ENCODE measurements at regions of chr10 and their contacts with region 1.

Region 1: GRCh38 chr10:127278001-127278400 is 81.6 kb upstream of the INSYN2A start:
- DNase-seq: peak; percentile 69
- ATAC-seq: peak; percentile 48
- H3K4me3 ChIP-seq: no peak overlapping the region
- H3K27ac ChIP-seq: peak overlapping the region; percentile 68
- H3K4me1 ChIP-seq: peaks cover 47% of the 10 kb centered on the region
- H3K27me3 ChIP-seq: no peaks in the 10 kb centered on the region
- CTCF ChIP-seq: peak; percentile 26
- EP300 ChIP-seq: peak in 1 of 2 experiments; percentile 15; a peak in 1 of 4 replicates
- POLR2A ChIP-seq: no peak
- RAD21 ChIP-seq: no peak

Region 2: GRCh38 chr10:127300868-127301321 is 22.9 kb after region 1 on chr10:
- CTCF ChIA-PET with region 1: no interaction called
- POLR2A ChIA-PET with region 1: interaction called, 68 read pairs
- in situ Hi-C with region 1: no loop called
- intact Hi-C with region 1: loop called (anchors 1 kb)
- DNase-seq: peak; percentile 87
- ATAC-seq: peak; percentile 98
- H3K4me3 ChIP-seq: peak overlapping the region; percentile 32 to 55 (median 44); a peak in 4 of 6 replicates
- H3K27ac ChIP-seq: peak overlapping the region; percentile 93
- H3K4me1 ChIP-seq: peaks cover 40% of the 10 kb centered on the region
- H3K27me3 ChIP-seq: no peaks in the 10 kb centered on the region
- CTCF ChIP-seq: no peak
- EP300 ChIP-seq: no peak
- POLR2A ChIP-seq: peak; percentile 55 to 76; a peak in 3 of 4 replicates
- RAD21 ChIP-seq: peak; percentile 8; the same call in 1 of the 2 replicates

Measured in HepG2 (cell line).